ENCODE measurements at regions of chr13 and their contacts with region 1.

Region 1: DNA sequence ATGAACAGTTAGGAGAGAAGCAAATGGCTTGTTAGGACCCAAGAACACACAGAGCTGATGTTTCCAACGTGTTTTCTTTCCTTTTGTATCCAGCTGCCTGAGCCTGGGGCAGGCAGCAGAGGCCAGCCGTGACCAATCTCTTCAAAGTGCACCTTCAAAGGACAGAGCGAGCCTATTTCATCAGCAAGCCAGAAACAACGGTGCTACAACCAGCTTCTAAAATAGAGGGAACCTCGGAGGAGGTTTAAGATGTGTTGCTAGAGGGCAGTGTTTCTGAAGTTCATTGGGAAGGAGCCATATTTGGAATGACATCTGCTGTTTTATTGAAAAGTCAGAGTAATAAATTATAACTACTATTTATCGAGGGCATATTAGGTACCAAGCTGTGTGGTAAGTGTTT is 56.2 kb upstream of the RFC3 start:
- DNase-seq: no peak
- ATAC-seq: no peak
- H3K4me3 ChIP-seq: no peak overlapping the region
- H3K4me3 Mint-ChIP-seq: no peak overlapping the region
- H3K27ac ChIP-seq: no peak overlapping the region
- H3K27ac Mint-ChIP-seq: no peak overlapping the region
- H3K4me1 ChIP-seq: no peaks in the 10 kb centered on the region
- H3K4me1 Mint-ChIP-seq: no peaks in the 10 kb centered on the region
- H3K27me3 ChIP-seq: no peaks in the 10 kb centered on the region
- H3K27me3 Mint-ChIP-seq: peaks cover 0 to 3% of the 10 kb centered on the region in 2 donors

Region 2: GRCh38 chr13:32311281-32311897 is 1450.4 kb before region 1 on chr13:
- CTCF ChIA-PET with region 1: interaction called in 1 of 2 experiments, 11 read pairs
- POLR2A ChIA-PET with region 1: no interaction called
- DNase-seq: no peak
- ATAC-seq: no peak
- H3K4me3 ChIP-seq: no peak overlapping the region
- H3K4me3 Mint-ChIP-seq: no peak overlapping the region
- H3K27ac ChIP-seq: no peak overlapping the region
- H3K27ac Mint-ChIP-seq: no peak overlapping the region
- H3K4me1 ChIP-seq: peaks cover 0 to 19% of the 10 kb centered on the region in 2 experiments
- H3K4me1 Mint-ChIP-seq: peaks cover 20 to 25% (median 24%) of the 10 kb centered on the region in 3 donors
- H3K27me3 ChIP-seq: no peaks in the 10 kb centered on the region
- H3K27me3 Mint-ChIP-seq: no peaks in the 10 kb centered on the region

Region 3: DNA sequence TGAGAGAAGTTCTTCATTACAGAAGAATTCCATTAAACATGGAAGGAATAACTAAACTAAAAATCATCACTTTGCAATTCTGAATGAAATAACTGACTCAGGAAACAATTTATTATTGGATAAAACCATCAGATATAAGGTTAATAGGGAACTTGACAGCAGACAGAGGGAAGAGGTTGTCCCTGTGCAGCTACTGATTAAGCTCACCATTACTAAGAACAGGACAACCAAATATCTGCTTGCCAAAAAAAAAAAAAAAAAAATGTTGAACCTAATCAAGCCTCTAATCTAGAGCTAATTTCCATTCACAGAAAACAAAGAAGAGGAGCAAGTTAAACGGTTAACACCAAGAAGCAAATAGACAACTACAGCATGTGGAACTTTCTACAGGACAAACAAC is 1236.0 kb before region 1 on chr13:
- CTCF ChIA-PET with region 1: no interaction called
- POLR2A ChIA-PET with region 1: interaction called in 1 of 2 experiments, 11 read pairs
- DNase-seq: no peak
- ATAC-seq: no peak
- H3K4me3 ChIP-seq: no peak overlapping the region
- H3K4me3 Mint-ChIP-seq: no peak overlapping the region
- H3K27ac ChIP-seq: no peak overlapping the region
- H3K27ac Mint-ChIP-seq: no peak overlapping the region
- H3K4me1 ChIP-seq: peaks cover 7 to 10% of the 10 kb centered on the region in 2 experiments
- H3K4me1 Mint-ChIP-seq: peaks cover 45 to 64% (median 60%) of the 10 kb centered on the region in 3 donors
- H3K27me3 ChIP-seq: no peaks in the 10 kb centered on the region
- H3K27me3 Mint-ChIP-seq: no peaks in the 10 kb centered on the region

Measured in T-cell (primary cell).